ENCODE measurements at regions of chr11 and their contacts with region 1.

Region 1: DNA sequence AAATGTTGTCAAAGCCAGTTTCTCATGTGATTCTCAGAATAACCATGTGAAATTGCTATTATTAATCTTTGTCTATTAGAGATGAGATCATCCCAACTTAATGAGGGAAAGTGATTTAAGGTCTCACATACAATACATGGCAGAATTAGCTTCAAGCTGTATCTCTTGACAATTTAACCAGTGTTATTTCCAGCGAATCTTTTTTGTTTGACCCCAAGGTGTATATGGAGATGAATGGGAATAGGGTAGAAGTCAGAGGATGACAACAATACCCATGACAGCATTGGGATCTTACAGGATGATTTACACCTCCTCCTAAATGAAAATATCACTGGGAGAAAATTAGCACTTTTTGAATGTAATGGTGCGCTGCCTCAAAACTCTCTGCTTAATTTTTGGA is 290.8 kb upstream of the LUZP2 start:
- DNase-seq: no peak
- H3K4me3 ChIP-seq: no peak overlapping the region
- H3K27ac ChIP-seq: no peak overlapping the region
- H3K4me1 ChIP-seq: no peaks in the 10 kb centered on the region
- H3K27me3 ChIP-seq: no peaks in the 10 kb centered on the region
- CTCF ChIP-seq: no peak
- EP300 ChIP-seq: no peak
- POLR2A ChIP-seq: no peak

Region 2: DNA sequence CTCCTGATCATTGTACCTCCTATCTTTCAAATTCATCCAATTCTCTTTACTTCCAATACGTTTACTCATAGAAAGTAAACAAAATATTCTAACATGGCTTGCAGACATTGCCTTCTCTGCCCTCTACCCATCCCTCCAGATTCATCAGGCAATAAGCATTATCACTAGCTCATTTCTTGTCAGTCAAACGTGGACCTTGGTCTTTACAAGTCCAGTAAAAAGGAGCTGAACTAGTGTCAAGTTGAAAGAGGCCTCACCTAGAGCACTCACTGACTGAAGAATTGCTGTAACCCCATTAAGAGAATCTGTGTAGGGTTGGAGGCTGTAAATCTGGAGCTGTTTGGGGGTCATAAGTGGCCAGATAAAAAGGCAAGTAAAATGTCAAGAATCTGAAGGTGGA is 910.8 kb before region 1 on chr11:
- intact Hi-C with region 1: loop called in 1 of 4 experiments (anchors 10 kb)
- DNase-seq: no peak
- H3K4me3 ChIP-seq: no peak overlapping the region
- H3K27ac ChIP-seq: no peak overlapping the region
- H3K4me1 ChIP-seq: no peaks in the 10 kb centered on the region
- H3K27me3 ChIP-seq: no peaks in the 10 kb centered on the region
- CTCF ChIP-seq: no peak
- EP300 ChIP-seq: no peak
- POLR2A ChIP-seq: no peak

Region 3: DNA sequence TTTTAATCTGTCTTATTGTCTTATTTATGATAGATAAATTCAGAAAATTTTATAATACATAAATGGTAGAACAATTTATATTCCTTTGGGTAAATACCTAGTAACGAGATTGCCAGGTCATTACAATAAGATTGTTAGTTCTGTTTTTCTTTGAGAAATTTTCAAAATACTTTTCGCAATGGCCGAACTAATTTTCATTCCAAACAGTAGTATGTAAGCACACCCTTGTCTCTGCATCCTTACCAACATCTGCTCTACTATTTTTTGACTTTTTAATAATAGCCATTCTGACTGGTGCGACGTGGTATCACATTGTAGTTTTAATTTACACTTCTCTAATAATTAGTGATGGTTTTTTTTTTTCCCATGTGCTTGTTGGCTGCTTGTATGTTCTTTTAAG is 60.6 kb before region 1 on chr11:
- intact Hi-C with region 1: no loop called
- DNase-seq: no peak
- H3K4me3 ChIP-seq: no peak overlapping the region
- H3K27ac ChIP-seq: no peak overlapping the region
- H3K4me1 ChIP-seq: no peaks in the 10 kb centered on the region
- H3K27me3 ChIP-seq: no peaks in the 10 kb centered on the region
- CTCF ChIP-seq: no peak
- EP300 ChIP-seq: no peak
- POLR2A ChIP-seq: no peak